ENCODE measurements at regions of chr5 and their contacts with region 1.

Region 1: GRCh38 chr5:43294226-43294625 is 19.0 kb downstream of the HMGCS1 start:
- DNase-seq: peak; percentile 61
- ATAC-seq: no peak
- H3K4me3 ChIP-seq: no peak overlapping the region
- H3K27ac ChIP-seq: no peak overlapping the region
- H3K4me1 ChIP-seq: peaks cover 37% of the 10 kb centered on the region
- H3K27me3 ChIP-seq: no peaks in the 10 kb centered on the region
- CTCF ChIP-seq: no peak

Region 2: DNA sequence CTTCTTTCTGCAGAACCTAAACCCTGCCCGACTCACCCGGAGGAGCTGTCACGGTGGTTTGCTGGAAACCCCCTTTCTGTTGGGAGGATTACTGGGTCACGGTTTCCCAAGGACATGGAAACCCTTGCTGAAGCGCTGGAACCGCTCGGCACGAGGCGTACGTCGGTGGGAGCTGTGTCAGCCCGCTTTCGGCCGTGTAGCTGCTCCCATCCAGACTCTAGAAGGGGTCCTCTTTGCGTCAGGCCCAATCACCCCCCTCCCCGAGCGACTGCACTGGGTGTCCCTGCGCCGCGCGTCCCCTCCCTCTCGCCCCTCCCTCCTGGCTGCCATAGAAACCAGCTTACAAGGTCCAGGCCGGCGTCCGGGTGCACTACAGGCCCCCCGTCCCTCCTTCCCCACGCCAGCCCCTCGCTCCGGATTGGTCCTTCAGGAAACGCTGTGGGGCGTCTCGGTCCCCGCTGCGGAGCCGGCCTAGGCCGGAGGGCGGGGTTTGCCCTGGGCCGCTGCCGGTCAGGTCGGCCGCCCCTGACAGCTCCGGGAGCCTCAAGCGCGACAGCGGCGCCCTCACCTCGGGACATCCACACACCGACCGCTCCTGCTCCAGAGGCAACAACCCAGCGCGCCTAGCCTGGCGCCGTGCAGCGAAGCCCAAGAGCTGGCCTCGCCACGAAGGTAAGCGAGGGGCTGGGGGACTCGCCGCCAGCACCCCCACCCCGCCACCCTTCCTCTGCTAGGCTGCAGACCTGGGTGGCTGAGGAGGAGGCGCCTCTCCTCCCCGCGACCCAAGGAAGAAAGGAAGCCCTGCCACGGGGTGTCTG is 102.3 kb before region 1 on chr5 and contains the start of gene NIM1K:
- CTCF ChIA-PET with region 1: no interaction called
- POLR2A ChIA-PET with region 1: no interaction called
- intact Hi-C with region 1: no loop called
- DNase-seq: peak; percentile 30
- ATAC-seq: peak; percentile 59
- H3K4me3 ChIP-seq: peak within 1 kb of the TSS; percentile 71
- H3K27ac ChIP-seq: peak within 1 kb of the TSS; percentile 48
- H3K4me1 ChIP-seq: peaks cover 16% of the 10 kb centered on the region
- H3K27me3 ChIP-seq: no peaks in the 10 kb centered on the region
- CTCF ChIP-seq: no peak
- total RNA-seq, gene NIM1K: 0.17 and 0.26 TPM in 2 replicates

Region 3: GRCh38 chr5:43215073-43215631 is 79.1 kb before region 1 on chr5:
- CTCF ChIA-PET with region 1: no interaction called
- POLR2A ChIA-PET with region 1: no interaction called
- intact Hi-C with region 1: no loop called
- DNase-seq: no peak
- ATAC-seq: no peak
- H3K4me3 ChIP-seq: no peak overlapping the region
- H3K27ac ChIP-seq: no peak overlapping the region
- H3K4me1 ChIP-seq: 0 out of 2 replicates have a peak, but pooled peaks cover 3% of the 10 kb centered on the region
- H3K27me3 ChIP-seq: no peaks in the 10 kb centered on the region
- CTCF ChIP-seq: no peak

Region 4: DNA sequence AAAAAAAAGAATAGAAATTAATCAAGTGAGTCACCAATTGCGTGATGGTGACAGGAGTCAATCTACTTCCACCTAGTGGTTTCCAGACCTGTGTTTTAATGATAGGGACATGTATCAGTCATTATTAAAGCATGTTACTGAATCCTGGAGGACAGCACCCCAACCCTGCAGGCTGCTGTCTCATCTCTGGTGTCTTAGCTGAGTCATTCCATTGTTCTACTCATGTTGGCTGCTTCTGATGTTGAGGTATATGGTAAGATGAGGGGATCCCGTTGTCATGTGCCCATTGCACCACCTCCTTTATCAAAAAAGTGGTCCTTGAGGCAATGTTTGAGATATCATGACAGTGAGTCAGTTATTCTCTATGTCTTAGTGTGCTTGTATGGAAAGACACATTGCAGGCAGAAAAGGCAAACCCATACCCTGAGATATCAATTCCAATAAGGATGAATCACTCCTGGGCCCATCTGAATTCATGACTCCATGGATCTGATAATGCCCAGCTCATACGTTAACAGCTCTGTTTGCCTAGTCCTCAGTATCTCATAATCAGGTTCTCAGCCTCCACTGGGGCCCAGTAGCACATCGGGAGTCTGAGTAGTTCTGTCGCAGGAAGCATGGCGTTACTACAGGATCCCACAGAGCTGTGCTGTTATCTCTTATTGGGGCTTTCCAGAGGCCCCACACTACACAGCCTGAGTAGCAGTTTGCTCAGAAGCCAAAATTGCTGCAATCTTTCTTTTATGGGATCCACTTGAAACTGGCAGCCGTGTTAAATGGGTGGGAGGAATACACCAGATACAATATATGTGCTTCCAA is 12.2 kb before region 1 on chr5:
- CTCF ChIA-PET with region 1: no interaction called
- POLR2A ChIA-PET with region 1: interaction called, 12 read pairs
- intact Hi-C with region 1: no loop called
- DNase-seq: peak; percentile 91
- ATAC-seq: peak; percentile 71
- H3K4me3 ChIP-seq: no peak overlapping the region
- H3K27ac ChIP-seq: peak overlapping the region; percentile 81
- H3K4me1 ChIP-seq: peaks cover 25% of the 10 kb centered on the region
- H3K27me3 ChIP-seq: no peaks in the 10 kb centered on the region
- CTCF ChIP-seq: 0 out of 2 replicates have a peak, but pooled peaks have one; percentile 13

Measured in PC-3 (cell line).